HepG2 (cell line): ENCODE measurements at regions of chr2 and their contacts with region 1.

Region 1: GRCh38 chr2:10019174-10019573 is 24.2 kb upstream of the KLF11 start:
- DNase-seq: peak; percentile 37
- ATAC-seq: peak; percentile 20; the same call in 2 of the 3 replicates
- H3K4me3 ChIP-seq: no peak overlapping the region
- H3K27ac ChIP-seq: no peak overlapping the region
- H3K4me1 ChIP-seq: peaks cover 32% of the 10 kb centered on the region
- H3K27me3 ChIP-seq: peaks cover 11 to 54% of the 10 kb centered on the region in 2 experiments; a peak in 4 of 5 replicates
- CTCF ChIP-seq: no peak
- EP300 ChIP-seq: peak in 1 of 2 experiments; percentile 24; a peak in 1 of 4 replicates
- POLR2A ChIP-seq: no peak
- RAD21 ChIP-seq: no peak

Region 2: GRCh38 chr2:9770308-9771100 is 248.7 kb before region 1 on chr2:
- CTCF ChIA-PET with region 1: no interaction called
- POLR2A ChIA-PET with region 1: no interaction called
- in situ Hi-C with region 1: no loop called
- intact Hi-C with region 1: loop called (anchors 1 kb)
- DNase-seq: peak; percentile 76
- ATAC-seq: peak; percentile 63
- H3K4me3 ChIP-seq: peak overlapping the region in 1 of 3 experiments; percentile 20; a peak in 1 of 6 replicates
- H3K27ac ChIP-seq: no peak overlapping the region
- H3K4me1 ChIP-seq: peaks cover 70% of the 10 kb centered on the region
- H3K27me3 ChIP-seq: peaks cover 9 to 71% of the 10 kb centered on the region in 2 experiments
- CTCF ChIP-seq: peak; percentile 82
- EP300 ChIP-seq: no peak
- POLR2A ChIP-seq: no peak
- RAD21 ChIP-seq: no peak; the same call in 1 of the 2 replicates

Region 3: GRCh38 chr2:10028988-10029874 is 10.1 kb after region 1 on chr2:
- CTCF ChIA-PET with region 1: no interaction called
- POLR2A ChIA-PET with region 1: interaction called, 11 read pairs
- in situ Hi-C with region 1: no loop called
- intact Hi-C with region 1: no loop called
- DNase-seq: no peak
- ATAC-seq: peak; percentile 67
- H3K4me3 ChIP-seq: peak overlapping the region in 1 of 3 experiments; percentile 45; a peak in 1 of 6 replicates
- H3K27ac ChIP-seq: no peak overlapping the region
- H3K4me1 ChIP-seq: peaks cover 46% of the 10 kb centered on the region
- H3K27me3 ChIP-seq: peaks cover 2 to 61% of the 10 kb centered on the region in 2 experiments; a peak in 4 of 5 replicates
- CTCF ChIP-seq: 0 out of 2 replicates have a peak, but pooled peaks have one; percentile 3
- EP300 ChIP-seq: no peak
- POLR2A ChIP-seq: no peak
- RAD21 ChIP-seq: no peak; the same call in 1 of the 2 replicates